Activated naive CD4-positive, alpha-beta T cell treated with anti-CD3 and anti-CD28 coated beads for 36 hours (primary cell): ENCODE measurements at regions of chr22 and their contacts with region 1.

Region 1: GRCh38 chr22:46035742-46036557 is 59.0 kb upstream of the WNT7B start:
- DNase-seq: peak; percentile 100
- H3K4me3 Mint-ChIP-seq: peak overlapping the region; percentile 86
- H3K27ac Mint-ChIP-seq: peak overlapping the region; percentile 85
- H3K4me1 Mint-ChIP-seq: peaks cover 15% of the 10 kb centered on the region
- H3K27me3 Mint-ChIP-seq: no peaks in the 10 kb centered on the region

Region 2: GRCh38 chr22:45309472-45310227 is 726.3 kb before region 1 on chr22 and contains the start of gene FAM118A:
- CTCF ChIA-PET with region 1: no interaction called
- intact Hi-C with region 1: loop called (anchors 5 kb)
- DNase-seq: peak; percentile 94
- H3K4me3 Mint-ChIP-seq: peak within 1 kb of the TSS; percentile 79
- H3K27ac Mint-ChIP-seq: peak within 1 kb of the TSS; percentile 87
- H3K4me1 Mint-ChIP-seq: peaks cover 45% of the 10 kb centered on the region
- H3K27me3 Mint-ChIP-seq: no peaks in the 10 kb centered on the region
- total RNA-seq, gene FAM118A: 62.2 to 66.9 TPM

Region 3: GRCh38 chr22:45968751-45969413 is 67.1 kb before region 1 on chr22:
- CTCF ChIA-PET with region 1: no interaction called
- intact Hi-C with region 1: no loop called
- DNase-seq: no peak
- H3K4me3 Mint-ChIP-seq: no peak overlapping the region
- H3K27ac Mint-ChIP-seq: no peak overlapping the region
- H3K4me1 Mint-ChIP-seq: peaks cover 1% of the 10 kb centered on the region
- H3K27me3 Mint-ChIP-seq: peaks cover 44% of the 10 kb centered on the region

Region 4: GRCh38 chr22:46013460-46014416 is 22.2 kb before region 1 on chr22:
- CTCF ChIA-PET with region 1: interaction called, 26 read pairs
- intact Hi-C with region 1: loop called (anchors 1 kb)
- DNase-seq: peak; percentile 97
- H3K4me3 Mint-ChIP-seq: peak overlapping the region; percentile 81
- H3K27ac Mint-ChIP-seq: peak overlapping the region; percentile 83
- H3K4me1 Mint-ChIP-seq: peaks cover 5% of the 10 kb centered on the region
- H3K27me3 Mint-ChIP-seq: no peaks in the 10 kb centered on the region

Region 5: DNA sequence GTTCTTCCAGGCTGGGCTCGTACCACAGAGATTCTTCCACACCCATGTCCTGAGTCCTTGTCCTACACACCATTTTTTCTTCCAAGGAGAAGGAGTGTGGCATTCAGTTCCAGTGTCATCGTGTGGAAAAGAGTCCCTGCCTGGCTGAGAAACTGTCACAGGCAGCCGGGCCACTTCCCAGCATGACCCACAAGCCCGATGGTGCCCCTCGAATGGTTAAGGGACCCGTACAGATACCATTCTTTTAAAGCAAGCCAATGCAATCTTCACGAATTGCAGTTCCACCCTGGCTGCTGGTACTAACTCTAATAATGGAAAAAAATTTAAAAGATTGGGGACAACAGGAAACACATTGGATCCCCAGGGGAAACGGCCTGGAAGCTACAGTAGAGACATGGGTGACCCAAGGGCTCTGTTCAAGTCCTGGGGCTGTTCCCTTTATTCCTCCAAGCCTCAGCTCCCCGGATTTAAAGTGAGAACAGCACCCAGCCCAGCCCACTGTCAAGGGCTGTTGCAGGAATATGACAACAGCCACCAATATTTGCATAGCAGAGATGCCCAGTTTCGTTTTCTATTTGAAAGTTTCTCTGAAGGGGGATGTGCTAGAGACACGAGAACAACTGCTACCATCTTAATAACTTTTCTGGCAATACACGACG is 21.9 kb after region 1 on chr22:
- CTCF ChIA-PET with region 1: interaction called, 5 read pairs
- intact Hi-C with region 1: loop called (anchors 1 kb)
- DNase-seq: peak; percentile 59
- H3K4me3 Mint-ChIP-seq: peak overlapping the region; percentile 42
- H3K27ac Mint-ChIP-seq: peak overlapping the region; percentile 73
- H3K4me1 Mint-ChIP-seq: peaks cover 43% of the 10 kb centered on the region
- H3K27me3 Mint-ChIP-seq: no peaks in the 10 kb centered on the region

Region 6: DNA sequence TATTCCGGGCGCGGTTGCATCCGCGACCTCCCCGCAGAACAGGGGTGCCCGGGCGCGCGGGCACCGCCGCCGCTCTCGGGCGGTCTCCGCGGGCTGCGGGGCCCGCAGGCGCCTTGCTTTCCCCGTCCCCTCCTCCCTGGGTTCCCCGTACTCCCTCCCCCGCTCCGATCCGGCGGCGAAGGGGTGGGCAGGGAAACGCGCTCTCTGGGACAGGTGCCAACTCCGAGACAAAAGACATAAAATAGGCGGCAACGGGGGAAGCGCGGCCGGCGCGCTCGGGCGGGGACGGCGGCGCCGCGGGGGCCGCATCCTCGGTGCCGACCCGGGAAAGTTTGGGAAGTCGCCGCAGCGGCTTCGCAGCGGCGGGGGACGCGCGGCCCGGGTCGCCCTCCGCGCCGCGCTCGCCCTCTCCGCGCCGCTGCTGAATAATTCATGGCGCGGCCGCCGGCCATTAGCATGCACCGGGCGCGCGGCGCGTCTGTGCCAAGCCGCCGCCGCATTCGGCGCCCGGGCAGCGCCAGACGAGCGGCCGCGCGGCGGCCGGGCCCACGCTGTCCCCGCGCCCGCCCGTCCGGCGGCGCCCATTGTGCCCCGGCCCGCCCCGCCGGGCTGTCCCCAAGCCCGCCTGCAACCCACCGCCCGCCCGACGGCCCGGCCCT is 35.6 kb after region 1 on chr22:
- CTCF ChIA-PET with region 1: interaction called, 7 read pairs
- intact Hi-C with region 1: loop called (anchors 1 kb)
- DNase-seq: peak; percentile 76
- H3K4me3 Mint-ChIP-seq: peak overlapping the region; percentile 83
- H3K27ac Mint-ChIP-seq: peak overlapping the region; percentile 87
- H3K4me1 Mint-ChIP-seq: peaks cover 49% of the 10 kb centered on the region
- H3K27me3 Mint-ChIP-seq: no peaks in the 10 kb centered on the region

Region 7: DNA sequence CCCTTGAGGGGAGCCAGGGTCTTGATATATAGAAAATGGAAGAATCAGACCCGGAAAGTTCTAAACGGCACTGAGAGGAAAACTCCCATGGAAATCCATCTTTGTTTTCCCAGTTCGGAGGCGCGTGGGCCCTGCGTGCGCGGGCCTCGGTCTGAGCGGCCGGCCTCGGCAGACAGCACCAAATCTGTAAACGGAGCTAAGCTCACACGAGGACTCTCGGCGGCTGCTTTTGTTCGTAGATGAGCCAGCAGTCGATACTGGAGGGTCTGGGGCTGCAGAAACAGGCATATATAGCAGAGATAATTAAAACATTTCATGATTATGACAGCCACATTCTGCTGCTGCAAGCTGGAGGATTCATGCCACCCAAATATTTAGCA is 45.9 kb after region 1 on chr22:
- CTCF ChIA-PET with region 1: no interaction called
- intact Hi-C with region 1: no loop called
- DNase-seq: no peak
- H3K4me3 Mint-ChIP-seq: no peak overlapping the region
- H3K27ac Mint-ChIP-seq: no peak overlapping the region
- H3K4me1 Mint-ChIP-seq: peaks cover 13% of the 10 kb centered on the region
- H3K27me3 Mint-ChIP-seq: no peaks in the 10 kb centered on the region

Region 8: GRCh38 chr22:46219636-46220035 is 183.7 kb after region 1 on chr22:
- CTCF ChIA-PET with region 1: no interaction called
- intact Hi-C with region 1: no loop called
- DNase-seq: peak; percentile 29
- H3K4me3 Mint-ChIP-seq: no peak overlapping the region
- H3K27ac Mint-ChIP-seq: no peak overlapping the region
- H3K4me1 Mint-ChIP-seq: peaks cover 12% of the 10 kb centered on the region
- H3K27me3 Mint-ChIP-seq: no peaks in the 10 kb centered on the region

Region 9: DNA sequence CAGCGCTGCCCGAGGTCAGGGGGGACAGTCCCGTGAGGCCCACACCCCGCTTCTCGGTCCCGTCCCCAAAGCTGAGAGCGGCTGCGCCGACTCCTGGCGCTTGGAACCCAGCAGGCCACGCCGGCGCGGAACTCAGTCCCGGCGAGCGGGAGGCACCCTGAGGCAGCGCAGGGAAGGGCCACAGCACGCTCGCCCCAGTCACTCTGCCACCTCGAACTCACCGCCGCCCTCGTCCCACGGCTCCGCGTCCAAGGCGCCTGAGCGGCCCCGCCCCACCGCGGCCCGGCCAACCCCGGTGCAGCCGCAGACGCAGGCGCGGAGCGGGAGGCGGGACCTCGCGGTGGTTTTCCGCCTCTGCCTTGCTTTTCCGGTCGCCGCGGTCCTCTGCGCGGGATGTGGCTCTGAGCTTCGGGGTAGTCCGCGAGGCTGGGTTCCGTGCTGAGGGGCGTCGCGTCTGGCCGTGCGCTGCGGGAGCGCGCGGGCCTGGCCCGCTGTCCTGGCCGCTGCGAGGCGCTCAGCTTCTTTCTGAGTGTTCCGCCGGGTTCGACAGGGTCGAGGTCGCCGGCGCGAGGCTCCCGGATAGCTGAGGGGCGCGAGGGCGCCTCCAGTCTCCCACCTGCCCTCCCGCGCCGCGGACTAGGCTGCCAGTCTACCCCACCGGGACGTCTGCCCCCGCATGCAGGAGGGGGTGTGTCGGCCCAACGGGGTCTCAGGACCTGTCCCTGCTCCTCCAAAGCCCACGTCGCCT is 214.3 kb after region 1 on chr22 and contains the start of gene CDPF1:
- CTCF ChIA-PET with region 1: no interaction called
- intact Hi-C with region 1: loop called (anchors 1 kb)
- DNase-seq: peak; percentile 91
- H3K4me3 Mint-ChIP-seq: peak within 1 kb of the TSS; percentile 80
- H3K27ac Mint-ChIP-seq: peak within 1 kb of the TSS; percentile 41
- H3K4me1 Mint-ChIP-seq: peaks cover 26% of the 10 kb centered on the region
- H3K27me3 Mint-ChIP-seq: no peaks in the 10 kb centered on the region
- total RNA-seq, gene CDPF1: 6.9 to 8.0 TPM